ENCODE measurements at regions of chr1 and their contacts with region 1.

Region 1: GRCh38 chr1:78114034-78114956 is 68.5 kb downstream of the GIPC2 start:
- DNase-seq: peak; percentile 72
- ATAC-seq: peak; percentile 93
- H3K4me3 Mint-ChIP-seq: no peak overlapping the region
- H3K27ac Mint-ChIP-seq: no peak overlapping the region
- H3K4me1 Mint-ChIP-seq: peaks cover 5% of the 10 kb centered on the region
- H3K27me3 Mint-ChIP-seq: no peaks in the 10 kb centered on the region

Region 2: DNA sequence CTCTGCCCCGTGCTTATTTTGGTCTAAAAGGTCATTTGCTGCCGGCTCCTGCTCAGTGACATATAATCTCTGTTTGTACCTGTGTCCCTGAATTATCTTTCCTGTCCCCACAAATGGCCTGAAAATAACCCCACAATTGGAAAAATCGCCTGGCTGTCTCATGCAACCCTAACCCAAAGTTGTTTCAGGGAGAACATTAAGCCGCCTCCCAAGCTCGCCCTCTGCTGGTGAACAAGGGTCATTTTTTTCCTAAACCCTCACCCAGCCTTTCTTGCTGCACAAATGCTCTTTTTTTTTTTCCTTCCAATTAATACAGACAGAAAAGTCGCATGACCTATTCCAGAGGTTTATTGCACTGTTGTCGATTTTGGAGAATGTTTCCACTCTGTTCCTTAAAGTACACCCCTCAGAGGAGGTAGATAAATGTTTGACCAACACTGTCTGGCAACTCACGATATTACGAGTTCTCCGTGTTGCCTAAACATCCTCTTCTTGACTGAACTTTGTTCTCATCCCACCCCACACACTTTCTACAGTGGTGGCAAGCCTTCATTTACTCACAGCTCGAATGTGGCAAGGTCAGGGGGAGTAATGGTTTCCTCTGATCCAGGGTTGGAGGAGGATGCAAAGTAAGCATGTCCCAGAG is 580.5 kb before region 1 on chr1:
- CTCF ChIA-PET with region 1: no interaction called
- POLR2A ChIA-PET with region 1: no interaction called
- intact Hi-C with region 1: loop called in 1 of 2 experiments (anchors 5 kb)
- DNase-seq: peak; percentile 75
- ATAC-seq: peak; percentile 70
- H3K4me3 Mint-ChIP-seq: no peak overlapping the region
- H3K27ac Mint-ChIP-seq: peak overlapping the region; percentile 69
- H3K4me1 Mint-ChIP-seq: peaks cover 7% of the 10 kb centered on the region
- H3K27me3 Mint-ChIP-seq: no peaks in the 10 kb centered on the region

Region 3: GRCh38 chr1:77906019-77906545 is 208.2 kb before region 1 on chr1:
- CTCF ChIA-PET with region 1: no interaction called
- POLR2A ChIA-PET with region 1: no interaction called
- intact Hi-C with region 1: loop called in 1 of 2 experiments (anchors 5 kb)
- DNase-seq: no peak
- ATAC-seq: no peak
- H3K4me3 Mint-ChIP-seq: no peak overlapping the region
- H3K27ac Mint-ChIP-seq: no peak overlapping the region
- H3K4me1 Mint-ChIP-seq: no peaks in the 10 kb centered on the region
- H3K27me3 Mint-ChIP-seq: no peaks in the 10 kb centered on the region

Region 4: GRCh38 chr1:78045926-78046778 is 68.1 kb before region 1 on chr1 and contains the start of gene GIPC2:
- CTCF ChIA-PET with region 1: interaction called, 6 read pairs
- POLR2A ChIA-PET with region 1: no interaction called
- intact Hi-C with region 1: loop called in 1 of 2 experiments (anchors 5 kb)
- DNase-seq: peak; percentile 62
- ATAC-seq: peak; percentile 72
- H3K4me3 Mint-ChIP-seq: peak within 1 kb of the TSS; percentile 66
- H3K27ac Mint-ChIP-seq: no peak within 1 kb of the TSS
- H3K4me1 Mint-ChIP-seq: peaks cover 29% of the 10 kb centered on the region
- H3K27me3 Mint-ChIP-seq: peaks cover 33% of the 10 kb centered on the region
- total RNA-seq, gene GIPC2: 0.05 to 0.09 TPM

Region 5: GRCh38 chr1:78092686-78093085 is 21.6 kb before region 1 on chr1:
- CTCF ChIA-PET with region 1: no interaction called
- POLR2A ChIA-PET with region 1: no interaction called
- intact Hi-C with region 1: no loop called
- DNase-seq: no peak
- ATAC-seq: no peak
- H3K4me3 Mint-ChIP-seq: no peak overlapping the region
- H3K27ac Mint-ChIP-seq: no peak overlapping the region
- H3K4me1 Mint-ChIP-seq: no peaks in the 10 kb centered on the region
- H3K27me3 Mint-ChIP-seq: peaks cover 11% of the 10 kb centered on the region

Region 6: DNA sequence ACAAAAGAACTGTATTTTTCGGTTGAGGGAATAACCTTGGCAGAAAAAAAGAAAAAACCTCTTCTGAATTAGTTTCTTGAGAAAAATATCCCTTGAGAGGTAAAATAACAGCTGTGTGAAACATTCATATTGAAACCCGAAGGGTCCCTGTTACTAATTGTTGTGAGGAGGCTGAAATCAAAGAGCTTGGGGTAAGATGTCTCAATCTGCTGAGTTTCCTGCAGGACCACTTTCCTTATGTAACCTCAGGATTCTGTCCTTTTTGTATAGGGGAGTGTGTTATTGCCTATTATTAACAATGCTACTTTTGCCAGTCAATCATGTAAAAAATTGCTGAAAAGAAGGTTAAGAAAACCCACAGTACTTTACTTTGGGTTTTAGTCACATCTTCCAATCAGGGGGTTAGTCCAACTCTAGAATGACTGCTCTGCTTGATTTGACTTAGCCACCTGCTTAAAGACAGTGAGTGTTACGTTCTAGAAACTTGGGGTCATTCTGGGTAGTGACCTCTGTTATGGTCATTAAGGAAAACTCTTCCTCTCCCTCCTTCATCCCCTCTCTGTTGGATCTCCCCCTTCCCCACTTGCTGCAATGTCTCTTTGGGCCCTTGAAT is 70.3 kb after region 1 on chr1:
- CTCF ChIA-PET with region 1: no interaction called
- POLR2A ChIA-PET with region 1: no interaction called
- intact Hi-C with region 1: no loop called
- DNase-seq: no peak
- ATAC-seq: no peak
- H3K4me3 Mint-ChIP-seq: no peak overlapping the region
- H3K27ac Mint-ChIP-seq: no peak overlapping the region
- H3K4me1 Mint-ChIP-seq: no peaks in the 10 kb centered on the region
- H3K27me3 Mint-ChIP-seq: peaks cover 4% of the 10 kb centered on the region

Measured in activated CD4-positive, alpha-beta T cell treated with anti-CD3 and anti-CD28 coated beads for 36 hours (primary cell).